Caco-2 (cell line): ENCODE measurements at regions of chrX and their contacts with region 1.

Region 1: DNA sequence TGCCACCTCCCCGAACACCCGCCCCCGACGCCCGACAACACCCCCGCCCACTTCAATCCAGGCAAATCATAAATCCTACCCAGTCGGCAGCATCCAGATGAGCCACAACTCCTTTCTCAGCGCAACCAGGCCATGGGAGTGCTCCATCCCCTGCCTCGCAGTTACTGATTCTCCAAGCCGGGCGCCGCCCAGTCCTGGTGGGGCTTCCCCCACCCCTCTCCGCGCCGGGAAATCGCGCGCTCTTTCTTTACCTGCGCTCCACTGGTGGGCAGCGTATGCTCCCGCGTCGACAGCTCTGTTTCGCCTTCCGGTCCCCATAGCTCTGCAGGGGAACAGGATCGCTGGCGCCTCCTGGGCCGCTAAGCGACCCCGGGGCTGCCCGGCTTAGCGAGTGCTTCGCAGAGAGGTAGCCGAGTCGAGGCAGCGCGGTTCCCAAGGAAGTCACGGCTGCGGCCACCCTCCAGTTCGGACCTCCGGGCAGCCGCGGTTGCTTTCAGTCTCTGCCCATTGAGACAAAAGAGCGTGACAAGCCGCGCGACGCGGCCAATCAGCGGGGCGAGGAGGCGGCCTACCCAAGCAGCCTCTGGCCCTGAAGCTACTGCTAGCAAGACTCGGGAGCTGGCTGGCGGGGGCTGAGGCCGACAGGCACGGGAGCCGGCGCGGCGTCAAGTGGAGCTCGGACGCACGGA is 43.7 kb upstream of the TMSB15B start:
- DNase-seq: peak; percentile 61
- H3K4me3 ChIP-seq: peak overlapping the region; percentile 42
- H3K4me3 Mint-ChIP-seq: peak overlapping the region; percentile 94
- H3K27ac Mint-ChIP-seq: peak overlapping the region; percentile 53
- H3K4me1 ChIP-seq: no peaks in the 10 kb centered on the region; the same call in 1 of the 2 replicates
- H3K4me1 Mint-ChIP-seq: peaks cover 3% of the 10 kb centered on the region
- H3K27me3 ChIP-seq: no peaks in the 10 kb centered on the region
- H3K27me3 Mint-ChIP-seq: no peaks in the 10 kb centered on the region
- CTCF ChIP-seq: no peak

Region 2: DNA sequence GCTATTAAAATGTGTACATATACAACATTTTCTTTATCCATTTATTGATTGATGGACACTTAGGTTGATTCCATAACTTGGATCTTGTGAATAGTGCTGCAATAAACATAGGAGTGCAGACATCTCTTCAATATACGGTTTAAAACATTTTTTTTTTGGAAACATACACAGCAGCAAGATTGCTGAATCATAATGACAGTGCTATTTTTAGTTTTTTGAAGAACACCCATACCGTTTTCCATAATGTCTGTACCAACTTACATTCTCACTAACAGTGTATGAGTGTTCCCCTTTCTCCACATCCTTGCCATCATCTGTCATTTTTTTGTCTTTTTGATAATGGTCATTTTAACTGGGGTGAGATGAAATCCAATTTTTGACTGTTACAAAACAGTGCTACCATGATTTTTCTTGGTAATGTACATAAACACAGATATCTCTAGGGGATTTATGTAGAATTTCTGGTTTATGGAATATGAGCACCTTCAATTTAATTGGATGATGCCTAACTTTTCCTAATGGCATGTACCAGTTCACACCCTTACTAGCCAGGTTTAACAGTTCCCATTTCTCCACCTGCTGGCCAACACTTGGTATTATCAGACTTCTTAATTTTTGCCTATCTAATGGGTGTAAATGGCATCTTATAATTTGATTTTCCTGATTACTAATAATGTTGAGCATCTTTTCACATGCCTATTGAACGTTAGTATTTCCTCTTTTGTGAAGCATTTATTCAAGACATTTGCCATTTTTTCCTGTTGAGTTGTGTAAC is 22.7 kb after region 1 on chrX:
- CTCF ChIA-PET with region 1: interaction called, 3 read pairs
- POLR2A ChIA-PET with region 1: no interaction called
- intact Hi-C with region 1: loop called (anchors 1 kb)
- DNase-seq: peak in 1 of 2 experiments; percentile 19
- H3K4me3 ChIP-seq: no peak overlapping the region
- H3K4me3 Mint-ChIP-seq: no peak overlapping the region
- H3K27ac Mint-ChIP-seq: no peak overlapping the region
- H3K4me1 ChIP-seq: no peaks in the 10 kb centered on the region
- H3K4me1 Mint-ChIP-seq: no peaks in the 10 kb centered on the region
- H3K27me3 ChIP-seq: no peaks in the 10 kb centered on the region
- H3K27me3 Mint-ChIP-seq: peaks cover 6% of the 10 kb centered on the region
- CTCF ChIP-seq: peak in 1 of 2 experiments; percentile 29

Region 3: DNA sequence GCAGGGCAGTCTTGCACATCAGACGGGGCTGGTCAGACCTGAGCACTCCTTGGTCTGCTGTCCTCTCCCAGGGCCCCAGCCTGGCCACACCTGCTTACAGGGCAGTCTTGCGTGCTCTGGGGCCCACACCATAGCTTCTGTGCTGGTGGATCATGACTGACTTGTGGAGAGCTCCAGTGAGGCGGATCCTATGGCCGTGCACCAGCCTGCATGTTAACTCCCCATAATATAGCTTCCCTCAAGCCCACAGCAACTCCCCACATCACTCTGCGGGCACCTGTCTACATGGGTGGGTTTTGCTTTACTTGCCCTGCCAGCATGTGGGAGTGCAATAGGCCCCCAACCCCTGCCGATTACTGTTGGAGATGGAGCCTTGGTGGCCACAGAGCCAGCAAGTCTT is 35.5 kb after region 1 on chrX:
- CTCF ChIA-PET with region 1: no interaction called
- POLR2A ChIA-PET with region 1: no interaction called
- intact Hi-C with region 1: no loop called
- DNase-seq: no peak
- H3K4me3 ChIP-seq: no peak overlapping the region
- H3K4me3 Mint-ChIP-seq: no peak overlapping the region
- H3K27ac Mint-ChIP-seq: no peak overlapping the region
- H3K4me1 ChIP-seq: no peaks in the 10 kb centered on the region
- H3K4me1 Mint-ChIP-seq: no peaks in the 10 kb centered on the region
- H3K27me3 ChIP-seq: no peaks in the 10 kb centered on the region
- H3K27me3 Mint-ChIP-seq: peaks cover 5% of the 10 kb centered on the region
- CTCF ChIP-seq: no peak

Region 4: DNA sequence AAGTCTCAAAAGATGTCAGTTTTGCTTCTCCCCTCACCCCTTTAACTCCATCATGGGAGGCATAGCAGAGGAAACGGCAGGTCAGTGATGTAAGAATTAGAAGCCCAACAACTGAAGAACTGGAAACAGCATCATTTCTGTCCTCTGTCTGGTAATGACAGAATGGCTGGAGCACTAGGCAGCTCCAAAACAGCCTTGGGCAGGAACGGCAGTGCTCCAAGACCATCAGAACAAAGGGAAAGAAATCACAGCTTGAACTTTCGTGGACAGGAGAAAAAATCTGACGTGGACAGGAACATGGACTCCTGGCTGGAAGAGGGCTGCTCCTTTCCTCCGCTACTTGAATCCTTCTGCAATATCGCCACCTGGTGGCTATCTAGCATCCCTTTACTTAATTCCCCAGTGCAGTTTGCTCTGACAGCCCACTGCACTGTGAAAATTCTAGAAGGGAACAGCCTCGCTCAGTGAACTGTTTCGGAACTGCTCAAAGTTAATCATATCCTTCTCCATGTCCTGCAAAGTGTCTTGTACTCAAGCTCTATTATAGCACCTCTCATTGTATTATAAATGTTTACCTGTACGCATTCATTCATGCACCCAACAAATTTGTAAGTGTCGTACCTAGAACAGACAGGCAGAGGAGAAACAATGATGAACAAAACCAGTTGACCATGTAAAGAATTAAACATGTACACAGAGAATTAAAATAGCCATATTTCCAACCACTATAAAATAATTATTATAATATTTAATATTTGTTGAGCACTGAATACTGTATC is 217.7 kb after region 1 on chrX:
- CTCF ChIA-PET with region 1: no interaction called
- POLR2A ChIA-PET with region 1: no interaction called
- intact Hi-C with region 1: loop called (anchors 2 kb)
- DNase-seq: peak; percentile 64 to 72
- H3K4me3 ChIP-seq: peak overlapping the region; percentile 30; the same call in 1 of the 2 replicates
- H3K4me3 Mint-ChIP-seq: peak overlapping the region; percentile 68
- H3K27ac Mint-ChIP-seq: no peak overlapping the region
- H3K4me1 ChIP-seq: no peaks in the 10 kb centered on the region
- H3K4me1 Mint-ChIP-seq: no peaks in the 10 kb centered on the region
- H3K27me3 ChIP-seq: no peaks in the 10 kb centered on the region
- H3K27me3 Mint-ChIP-seq: no peaks in the 10 kb centered on the region
- CTCF ChIP-seq: peak; percentile 44 to 56